MCF 10A (cell line): ENCODE measurements at regions of chr1 and their contacts with region 1.

Region 1: DNA sequence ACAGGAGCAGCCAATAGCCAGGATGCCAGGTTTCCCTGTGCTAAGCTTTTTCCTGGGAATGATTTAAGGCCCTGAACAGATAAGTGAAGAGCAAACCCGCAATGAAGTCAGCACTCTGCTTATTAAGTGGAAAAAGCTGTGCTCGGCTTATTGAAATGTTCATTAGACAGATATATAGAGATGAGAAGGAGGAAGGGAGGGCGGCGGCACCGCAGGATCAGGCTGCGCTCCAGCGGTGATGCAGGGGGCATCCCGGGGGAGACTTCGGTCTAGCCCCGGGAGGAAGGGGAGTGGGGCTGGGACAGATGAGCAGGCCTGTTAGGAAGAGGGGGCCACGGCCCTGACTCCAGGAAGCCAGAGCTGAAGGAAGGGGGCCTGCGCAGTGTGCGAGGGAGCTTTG is 115.0 kb downstream of the TMEM53 start:
- DNase-seq: no peak
- H3K4me3 Mint-ChIP-seq: no peak overlapping the region
- H3K27ac Mint-ChIP-seq: peak overlapping the region; percentile 93
- H3K4me1 Mint-ChIP-seq: peaks cover 47% of the 10 kb centered on the region
- H3K27me3 Mint-ChIP-seq: no peaks in the 10 kb centered on the region
- CTCF ChIP-seq: no peak

Region 2: DNA sequence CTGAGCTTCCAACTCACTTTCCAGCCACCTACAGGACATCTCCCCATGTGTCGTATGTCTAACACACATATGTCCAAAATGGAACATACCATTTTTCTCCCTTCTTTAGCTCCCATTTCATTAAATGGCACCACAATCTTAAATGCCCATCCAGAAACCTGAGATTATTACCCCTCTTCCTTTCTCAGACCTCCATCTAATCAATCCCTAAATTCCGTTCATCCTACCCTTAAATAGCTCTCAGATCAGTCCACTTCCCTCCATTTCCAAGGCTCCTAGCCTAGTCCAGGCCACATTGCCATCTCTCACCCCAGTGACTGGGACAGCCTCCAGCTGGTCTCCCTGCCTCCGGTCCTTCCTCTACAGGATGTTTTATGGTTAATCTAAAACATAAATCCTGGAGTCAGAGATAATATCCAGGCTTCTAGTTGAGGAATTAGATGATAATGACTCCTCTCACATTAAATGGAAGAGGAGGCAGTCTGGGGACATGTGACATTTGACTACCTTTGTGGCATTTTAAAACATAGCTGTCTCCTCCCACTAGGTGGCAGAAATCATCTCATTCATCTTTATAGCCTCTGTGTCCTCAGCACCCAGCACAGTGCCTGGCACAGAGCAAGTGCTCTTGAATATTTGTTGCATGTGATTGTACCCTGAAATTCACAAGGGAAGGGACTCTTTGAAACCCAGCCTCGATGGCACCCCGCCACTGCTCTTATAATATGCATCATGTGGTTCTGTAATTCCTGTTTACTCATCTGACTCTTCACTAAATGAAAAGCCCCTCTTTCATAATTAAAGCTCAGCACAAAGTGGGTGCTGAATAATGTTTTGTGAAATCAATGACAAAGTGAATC is 12.6 kb after region 1 on chr1:
- CTCF ChIA-PET with region 1: interaction called, 26 read pairs
- POLR2A ChIA-PET with region 1: interaction called, 19 read pairs
- intact Hi-C with region 1: no loop called
- DNase-seq: peak; percentile 40
- H3K4me3 Mint-ChIP-seq: no peak overlapping the region
- H3K27ac Mint-ChIP-seq: no peak overlapping the region
- H3K4me1 Mint-ChIP-seq: peaks cover 15% of the 10 kb centered on the region
- H3K27me3 Mint-ChIP-seq: no peaks in the 10 kb centered on the region
- CTCF ChIP-seq: peak; percentile 30